HepG2 (cell line): ENCODE measurements at regions of chr14 and their contacts with region 1.

Region 1: DNA sequence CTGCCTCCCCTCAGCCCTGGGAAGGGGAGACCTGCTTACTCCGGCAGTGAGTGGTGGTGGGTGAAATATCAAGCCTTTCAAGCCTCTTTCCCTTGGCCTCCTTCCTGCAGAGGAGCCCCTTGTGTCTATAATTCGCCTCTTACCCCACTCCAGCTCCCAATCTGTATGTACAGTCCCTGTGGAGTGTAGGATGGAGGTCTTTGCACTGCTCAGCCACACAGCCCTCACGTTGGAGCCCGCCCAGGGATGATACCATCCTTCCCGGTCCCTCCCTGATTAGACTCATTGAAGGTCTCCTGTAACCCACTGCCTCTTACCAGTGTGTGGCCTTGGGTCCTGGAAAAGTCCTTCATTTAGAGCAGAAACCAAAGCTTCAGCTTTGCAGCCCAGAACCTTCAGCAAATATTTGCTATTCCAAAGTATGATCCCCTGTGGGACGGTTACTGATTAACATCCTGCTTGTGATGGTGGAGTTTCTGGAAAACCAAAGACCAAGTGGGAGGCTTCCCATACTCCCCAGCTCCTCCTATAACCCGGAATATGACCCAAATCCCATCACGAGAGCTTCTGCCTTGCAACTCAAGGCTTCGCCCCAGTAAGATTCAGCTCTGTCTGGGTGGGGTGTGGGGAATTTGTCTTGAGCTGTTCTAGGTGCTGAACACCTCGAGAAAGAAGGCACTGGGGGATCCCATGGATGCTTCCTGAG is at the start of gene SERPINA10:
- DNase-seq: peak; percentile 99
- ATAC-seq: peak; percentile 95
- H3K4me3 ChIP-seq: peak within 1 kb of the TSS; percentile 48 to 84 (median 67)
- H3K27ac ChIP-seq: peak within 1 kb of the TSS; percentile 97
- H3K4me1 ChIP-seq: peaks cover 96% of the 10 kb centered on the region
- H3K27me3 ChIP-seq: no peaks in the 10 kb centered on the region; a peak in 1 of 5 replicates
- CTCF ChIP-seq: no peak
- EP300 ChIP-seq: peak; percentile 17 to 90; a peak in 2 of 4 replicates
- POLR2A ChIP-seq: peak; percentile 85 to 94
- RAD21 ChIP-seq: peak; percentile 20; the same call in 1 of the 2 replicates
- total RNA-seq, gene SERPINA10: 12.1 and 20.1 TPM in 2 replicates

Region 2: GRCh38 chr14:94173885-94174603 is 119.0 kb before region 1 on chr14 and contains the start of gene PPP4R4:
- CTCF ChIA-PET with region 1: no interaction called
- POLR2A ChIA-PET with region 1: interaction called, 37 read pairs
- in situ Hi-C with region 1: no loop called
- intact Hi-C with region 1: no loop called
- DNase-seq: peak; percentile 89
- ATAC-seq: peak; percentile 83
- H3K4me3 ChIP-seq: peak within 1 kb of the TSS; percentile 84 to 86 (median 84)
- H3K27ac ChIP-seq: peak within 1 kb of the TSS; percentile 54
- H3K4me1 ChIP-seq: peaks cover 45% of the 10 kb centered on the region
- H3K27me3 ChIP-seq: peaks cover 0 to 7% of the 10 kb centered on the region in 2 experiments; a peak in 3 of 5 replicates
- CTCF ChIP-seq: no peak
- EP300 ChIP-seq: no peak
- POLR2A ChIP-seq: peak in 1 of 2 experiments; percentile 66; a peak in 2 of 4 replicates
- RAD21 ChIP-seq: 0 out of 2 replicates have a peak, but pooled peaks have one; percentile 12
- total RNA-seq, gene PPP4R4: 19.8 and 21.2 TPM in 2 replicates

Region 3: DNA sequence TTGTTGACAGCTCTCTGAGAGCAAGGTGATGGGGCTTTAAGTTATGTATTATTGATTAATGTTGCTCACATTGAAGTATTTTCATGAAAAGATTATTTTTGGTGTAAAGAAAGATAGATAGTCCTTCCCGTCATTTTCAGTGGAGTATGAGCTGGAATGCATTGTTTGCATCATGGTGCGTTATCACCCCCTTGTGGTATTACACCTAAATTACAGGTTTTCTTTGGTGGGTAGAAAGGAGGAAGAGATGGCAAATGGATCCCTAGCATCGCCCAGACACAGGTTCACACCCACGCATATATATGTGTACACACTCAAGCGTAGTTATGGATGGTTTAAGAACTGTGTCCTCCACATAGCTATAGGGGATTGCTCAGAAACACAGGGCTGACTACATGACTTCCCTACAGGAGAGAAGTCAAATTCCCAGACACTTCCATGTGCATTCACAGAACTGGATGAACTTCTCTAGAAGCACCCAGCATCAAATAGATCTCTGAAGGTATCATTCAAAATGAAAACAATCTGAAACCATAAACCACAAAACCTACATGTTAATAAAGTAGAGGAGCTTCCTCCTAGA is 14.5 kb after region 1 on chr14:
- CTCF ChIA-PET with region 1: no interaction called
- POLR2A ChIA-PET with region 1: interaction called, 18 read pairs
- in situ Hi-C with region 1: no loop called
- intact Hi-C with region 1: no loop called
- DNase-seq: peak; percentile 50
- ATAC-seq: peak; percentile 65
- H3K4me3 ChIP-seq: no peak overlapping the region
- H3K27ac ChIP-seq: no peak overlapping the region
- H3K4me1 ChIP-seq: peaks cover 18% of the 10 kb centered on the region
- H3K27me3 ChIP-seq: no peaks in the 10 kb centered on the region
- CTCF ChIP-seq: peak; percentile 88
- EP300 ChIP-seq: no peak
- POLR2A ChIP-seq: no peak
- RAD21 ChIP-seq: peak; percentile 80

Region 4: GRCh38 chr14:94322648-94323570 is 29.9 kb after region 1 on chr14 and contains the start of gene SERPINA6:
- CTCF ChIA-PET with region 1: no interaction called
- POLR2A ChIA-PET with region 1: interaction called, 23 read pairs
- in situ Hi-C with region 1: no loop called
- intact Hi-C with region 1: no loop called
- DNase-seq: peak; percentile 95
- ATAC-seq: peak; percentile 92
- H3K4me3 ChIP-seq: peak within 1 kb of the TSS; percentile 61 to 87 (median 67)
- H3K27ac ChIP-seq: peak within 1 kb of the TSS; percentile 87
- H3K4me1 ChIP-seq: peaks cover 72% of the 10 kb centered on the region
- H3K27me3 ChIP-seq: no peaks in the 10 kb centered on the region
- CTCF ChIP-seq: no peak
- EP300 ChIP-seq: peak in 1 of 2 experiments; percentile 60; a peak in 2 of 4 replicates
- POLR2A ChIP-seq: peak; percentile 84 to 99
- RAD21 ChIP-seq: peak; percentile 31; the same call in 1 of the 2 replicates
- total RNA-seq, gene SERPINA6: 144 and 260 TPM in 2 replicates

Region 5: DNA sequence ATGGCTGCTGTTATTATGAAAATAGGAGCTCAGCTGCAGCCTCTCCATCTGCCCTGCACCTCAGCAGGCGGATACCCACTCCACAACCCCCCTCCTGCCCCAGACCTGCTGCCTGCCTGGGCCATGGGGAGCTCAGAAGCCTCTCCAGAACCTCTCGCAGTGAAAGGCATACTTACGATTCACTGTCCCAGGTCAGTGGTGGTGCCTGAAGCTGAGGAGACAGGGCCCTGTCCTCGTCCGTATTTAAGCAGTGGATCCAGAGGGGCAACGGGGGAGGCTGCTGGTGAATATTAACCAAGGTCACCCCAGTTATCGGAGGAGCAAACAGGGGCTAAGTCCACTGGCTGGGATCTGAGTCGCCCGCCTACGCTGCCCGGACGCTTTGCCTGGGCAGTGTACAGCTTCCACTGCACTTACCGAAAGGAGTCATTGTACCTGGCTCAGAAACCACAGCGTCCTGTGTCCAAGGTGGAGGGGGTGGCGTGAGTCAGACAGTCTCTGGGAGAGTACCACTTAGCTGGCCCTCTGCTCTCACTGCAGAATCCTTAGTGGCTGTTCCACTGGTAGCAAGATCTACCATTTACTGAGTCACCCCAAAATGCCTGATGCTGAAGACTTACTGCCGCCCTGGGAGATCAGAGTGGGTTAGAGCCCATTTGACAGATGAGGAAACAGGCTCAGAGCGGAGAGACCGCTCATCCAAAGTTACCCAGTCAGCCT is 95.5 kb after region 1 on chr14 and contains the start of gene SERPINA1:
- CTCF ChIA-PET with region 1: no interaction called
- POLR2A ChIA-PET with region 1: interaction called, 25 read pairs
- in situ Hi-C with region 1: no loop called
- intact Hi-C with region 1: no loop called
- DNase-seq: peak; percentile 96
- ATAC-seq: peak; percentile 92
- H3K4me3 ChIP-seq: peak within 1 kb of the TSS; percentile 69 to 92 (median 87)
- H3K27ac ChIP-seq: peak within 1 kb of the TSS; percentile 90
- H3K4me1 ChIP-seq: peaks cover 81% of the 10 kb centered on the region
- H3K27me3 ChIP-seq: no peaks in the 10 kb centered on the region; a peak in 1 of 5 replicates
- CTCF ChIP-seq: peak; percentile 38; the same call in 1 of the 2 replicates
- EP300 ChIP-seq: peak in 1 of 2 experiments; percentile 95; a peak in 2 of 4 replicates
- POLR2A ChIP-seq: peak; percentile 99 to 100
- RAD21 ChIP-seq: no peak; the same call in none of the 2 replicates
- total RNA-seq, gene SERPINA1: 2,013 and 3,266 TPM in 2 replicates